ENCODE measurements at regions of chr5 and their contacts with region 1.

Region 1: GRCh38 chr5:64811050-64811640 is 42.4 kb downstream of the CWC27 start:
- DNase-seq: peak; percentile 19 to 56 (median 36)
- ATAC-seq: peak; percentile 77
- H3K4me3 ChIP-seq: no peak overlapping the region
- H3K27ac ChIP-seq: no peak overlapping the region
- H3K4me1 ChIP-seq: no peaks in the 10 kb centered on the region
- H3K27me3 ChIP-seq: no peaks in the 10 kb centered on the region
- CTCF ChIP-seq: peak; percentile 37 to 81 (median 48); a peak in 5 of 6 replicates
- EP300 ChIP-seq: no peak
- POLR2A ChIP-seq: no peak
- RAD21 ChIP-seq: peak; percentile 83 to 85

Region 2: DNA sequence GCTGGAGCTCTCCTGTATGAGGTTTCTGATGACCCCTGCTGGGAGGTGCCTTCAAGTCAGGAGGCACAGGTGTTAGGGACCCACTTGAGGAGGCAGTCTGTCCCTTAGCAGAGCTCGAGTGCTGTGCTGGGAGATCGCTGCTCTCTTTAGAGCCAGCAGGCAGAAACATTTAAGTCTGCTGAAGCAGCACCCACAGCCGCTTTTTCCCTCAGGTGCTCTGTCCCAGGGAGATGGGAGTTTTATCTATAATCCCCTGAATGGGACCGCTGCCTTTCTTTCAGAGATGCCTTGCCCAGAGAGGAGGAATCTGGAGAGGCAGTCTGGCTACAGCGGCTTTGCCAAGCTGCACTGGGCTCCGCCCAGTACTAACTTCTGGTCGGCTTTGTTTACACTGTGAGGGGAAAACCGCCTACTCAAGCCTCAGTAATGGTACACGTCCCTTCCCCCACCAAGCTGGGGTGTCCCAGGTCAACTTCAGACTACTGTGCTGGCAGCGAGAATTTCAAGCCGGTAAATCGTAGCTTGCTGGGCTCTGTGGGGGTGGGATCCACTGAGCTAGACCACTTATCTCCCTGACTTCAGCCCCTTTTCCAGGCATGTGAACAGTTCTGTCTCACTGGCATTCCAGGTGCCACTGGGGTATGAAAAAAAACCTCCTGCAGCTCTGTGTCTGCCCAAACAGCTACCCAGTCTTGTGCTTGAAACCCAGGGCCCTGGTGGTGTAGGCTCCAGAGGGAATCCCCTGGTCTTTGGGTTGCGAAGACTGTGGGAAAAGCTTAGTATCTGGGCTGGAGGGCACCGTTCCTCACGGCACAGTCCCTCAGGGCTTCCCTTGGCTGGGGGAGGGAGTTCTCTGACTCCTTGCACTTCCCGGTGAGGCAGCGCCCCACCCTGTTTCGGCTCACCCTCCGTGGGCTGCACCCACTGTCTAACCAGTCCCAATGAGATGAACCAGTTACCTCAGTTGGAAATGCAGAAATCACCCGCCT is 128.7 kb after region 1 on chr5:
- CTCF ChIA-PET with region 1: no interaction called
- POLR2A ChIA-PET with region 1: no interaction called
- in situ Hi-C with region 1: no loop called
- intact Hi-C with region 1: loop called (anchors 10 kb)
- DNase-seq: peak in 2 of 4 experiments; percentile 23 to 60
- ATAC-seq: peak; percentile 92
- H3K4me3 ChIP-seq: no peak overlapping the region
- H3K27ac ChIP-seq: no peak overlapping the region
- H3K4me1 ChIP-seq: peaks cover 0 to 3% of the 10 kb centered on the region in 2 experiments; a peak in 3 of 5 replicates
- H3K27me3 ChIP-seq: no peaks in the 10 kb centered on the region
- CTCF ChIP-seq: no peak
- EP300 ChIP-seq: no peak
- POLR2A ChIP-seq: no peak
- RAD21 ChIP-seq: 0 out of 4 replicates have a peak, but pooled peaks of 1 of the 2 experiments have one; percentile 8

Region 3: GRCh38 chr5:65035211-65036206 is 224.4 kb after region 1 on chr5:
- CTCF ChIA-PET with region 1: no interaction called
- POLR2A ChIA-PET with region 1: no interaction called
- in situ Hi-C with region 1: no loop called
- intact Hi-C with region 1: loop called (anchors 10 kb)
- DNase-seq: peak; percentile 94 to 98 (median 96)
- ATAC-seq: peak; percentile 95
- H3K4me3 ChIP-seq: peak overlapping the region; percentile 45
- H3K27ac ChIP-seq: peak overlapping the region; percentile 94
- H3K4me1 ChIP-seq: peaks cover 14 to 24% of the 10 kb centered on the region in 2 experiments
- H3K27me3 ChIP-seq: no peaks in the 10 kb centered on the region
- CTCF ChIP-seq: 0 out of 6 replicates have a peak, but pooled peaks of 1 of the 3 experiments have one; percentile 4
- EP300 ChIP-seq: peak; percentile 53
- POLR2A ChIP-seq: peak; percentile 80
- RAD21 ChIP-seq: no peak

Region 4: GRCh38 chr5:65394087-65394486 is 582.9 kb after region 1 on chr5:
- CTCF ChIA-PET with region 1: no interaction called
- POLR2A ChIA-PET with region 1: no interaction called
- in situ Hi-C with region 1: no loop called
- intact Hi-C with region 1: loop called (anchors 10 kb)
- DNase-seq: no peak
- ATAC-seq: no peak
- H3K4me3 ChIP-seq: no peak overlapping the region
- H3K27ac ChIP-seq: no peak overlapping the region
- H3K4me1 ChIP-seq: no peaks in the 10 kb centered on the region
- H3K27me3 ChIP-seq: no peaks in the 10 kb centered on the region
- CTCF ChIP-seq: no peak
- EP300 ChIP-seq: no peak
- POLR2A ChIP-seq: no peak
- RAD21 ChIP-seq: no peak